HepG2 (cell line): ENCODE measurements at regions of chr2 and their contacts with region 1.

Region 1: GRCh38 chr2:24792874-24793760 is at the starts of genes CENPO and PTRHD1:
- DNase-seq: peak; percentile 98
- ATAC-seq: peak; percentile 93
- H3K4me3 ChIP-seq: peak within 1 kb of the TSS; percentile 85 to 95 (median 86)
- H3K27ac ChIP-seq: peak within 1 kb of the TSS; percentile 94
- H3K4me1 ChIP-seq: peaks cover 46% of the 10 kb centered on the region
- H3K27me3 ChIP-seq: no peaks in the 10 kb centered on the region; a peak in 1 of 5 replicates
- CTCF ChIP-seq: peak; percentile 97
- EP300 ChIP-seq: peak in 1 of 2 experiments; percentile 19; a peak in 1 of 4 replicates
- POLR2A ChIP-seq: peak; percentile 72 to 96
- RAD21 ChIP-seq: peak; percentile 91
- total RNA-seq, gene CENPO: 35.5 and 41.4 TPM in 2 replicates
- total RNA-seq, gene PTRHD1: 69.1 and 72.6 TPM in 2 replicates

Region 2: GRCh38 chr2:24490674-24491625 is 302.2 kb before region 1 on chr2 and contains the start of gene NCOA1:
- CTCF ChIA-PET with region 1: no interaction called
- POLR2A ChIA-PET with region 1: interaction called, 3 read pairs
- in situ Hi-C with region 1: loop called (anchors 10 kb)
- intact Hi-C with region 1: loop called (anchors 2 kb)
- DNase-seq: peak; percentile 75
- ATAC-seq: peak; percentile 82
- H3K4me3 ChIP-seq: peak within 1 kb of the TSS; percentile 80 to 90 (median 89)
- H3K27ac ChIP-seq: peak within 1 kb of the TSS; percentile 58
- H3K4me1 ChIP-seq: peaks cover 49% of the 10 kb centered on the region
- H3K27me3 ChIP-seq: peaks cover 0 to 10% of the 10 kb centered on the region in 2 experiments; a peak in 2 of 5 replicates
- CTCF ChIP-seq: no peak; the same call in 1 of the 2 replicates
- EP300 ChIP-seq: no peak
- POLR2A ChIP-seq: peak; percentile 77 to 84
- RAD21 ChIP-seq: no peak
- total RNA-seq, gene NCOA1: 10.0 and 10.5 TPM in 2 replicates

Region 3: GRCh38 chr2:24739354-24740025 is 53.6 kb before region 1 on chr2:
- CTCF ChIA-PET with region 1: no interaction called
- POLR2A ChIA-PET with region 1: no interaction called
- in situ Hi-C with region 1: no loop called
- intact Hi-C with region 1: no loop called
- DNase-seq: no peak
- ATAC-seq: no peak
- H3K4me3 ChIP-seq: no peak overlapping the region
- H3K27ac ChIP-seq: no peak overlapping the region
- H3K4me1 ChIP-seq: no peaks in the 10 kb centered on the region
- H3K27me3 ChIP-seq: no peaks in the 10 kb centered on the region
- CTCF ChIP-seq: no peak
- EP300 ChIP-seq: no peak
- POLR2A ChIP-seq: no peak
- RAD21 ChIP-seq: no peak

Region 4: DNA sequence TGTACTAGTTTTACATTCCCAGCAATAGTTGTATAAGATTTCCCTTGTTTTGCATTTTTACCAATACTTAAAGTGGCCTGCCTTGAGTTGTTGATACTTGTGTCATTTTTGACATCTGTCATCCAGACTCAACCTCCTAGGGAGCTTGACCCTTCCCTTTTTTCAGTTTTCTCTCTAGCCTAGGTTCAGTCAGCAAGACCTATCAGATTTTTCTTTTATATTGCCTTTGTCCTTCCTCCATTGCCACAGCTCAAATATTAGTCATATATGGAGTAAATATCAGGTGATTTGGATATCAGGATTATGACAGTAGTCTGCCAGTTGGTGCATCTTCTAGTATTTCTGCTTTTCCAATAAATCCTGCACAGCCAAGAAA is 13.5 kb after region 1 on chr2:
- CTCF ChIA-PET with region 1: no interaction called
- POLR2A ChIA-PET with region 1: interaction called, 14 read pairs
- in situ Hi-C with region 1: no loop called
- intact Hi-C with region 1: no loop called
- DNase-seq: no peak
- ATAC-seq: no peak
- H3K4me3 ChIP-seq: no peak overlapping the region
- H3K27ac ChIP-seq: no peak overlapping the region
- H3K4me1 ChIP-seq: peaks cover 15% of the 10 kb centered on the region
- H3K27me3 ChIP-seq: no peaks in the 10 kb centered on the region
- CTCF ChIP-seq: no peak
- EP300 ChIP-seq: no peak
- POLR2A ChIP-seq: no peak
- RAD21 ChIP-seq: no peak

Region 5: GRCh38 chr2:24909555-24910177 is 116.5 kb after region 1 on chr2:
- CTCF ChIA-PET with region 1: no interaction called
- POLR2A ChIA-PET with region 1: no interaction called
- in situ Hi-C with region 1: no loop called
- intact Hi-C with region 1: no loop called
- DNase-seq: no peak
- ATAC-seq: no peak
- H3K4me3 ChIP-seq: no peak overlapping the region
- H3K27ac ChIP-seq: no peak overlapping the region
- H3K4me1 ChIP-seq: no peaks in the 10 kb centered on the region
- H3K27me3 ChIP-seq: peaks cover 0 to 40% of the 10 kb centered on the region in 2 experiments; a peak in 2 of 5 replicates
- CTCF ChIP-seq: no peak
- EP300 ChIP-seq: no peak
- POLR2A ChIP-seq: no peak
- RAD21 ChIP-seq: no peak